HepG2 (cell line): ENCODE measurements at regions of chr14 and their contacts with region 1.

Region 1: GRCh38 chr14:94388384-94389103 is at the start of gene SERPINA1:
- DNase-seq: peak; percentile 96
- ATAC-seq: peak; percentile 92
- H3K4me3 ChIP-seq: peak within 1 kb of the TSS; percentile 69 to 92 (median 87)
- H3K27ac ChIP-seq: peak within 1 kb of the TSS; percentile 90
- H3K4me1 ChIP-seq: peaks cover 81% of the 10 kb centered on the region
- H3K27me3 ChIP-seq: no peaks in the 10 kb centered on the region; a peak in 1 of 5 replicates
- CTCF ChIP-seq: peak; percentile 38; the same call in 1 of the 2 replicates
- EP300 ChIP-seq: peak in 1 of 2 experiments; percentile 95; a peak in 2 of 4 replicates
- POLR2A ChIP-seq: peak; percentile 99 to 100
- RAD21 ChIP-seq: no peak; the same call in none of the 2 replicates
- total RNA-seq, gene SERPINA1: 2,013 and 3,266 TPM in 2 replicates

Region 2: GRCh38 chr14:94305620-94306019 is 82.9 kb before region 1 on chr14:
- CTCF ChIA-PET with region 1: no interaction called
- POLR2A ChIA-PET with region 1: no interaction called
- in situ Hi-C with region 1: no loop called
- intact Hi-C with region 1: no loop called
- DNase-seq: no peak
- ATAC-seq: no peak
- H3K4me3 ChIP-seq: no peak overlapping the region
- H3K27ac ChIP-seq: no peak overlapping the region
- H3K4me1 ChIP-seq: peaks cover 14% of the 10 kb centered on the region
- H3K27me3 ChIP-seq: no peaks in the 10 kb centered on the region
- CTCF ChIP-seq: no peak
- EP300 ChIP-seq: no peak
- POLR2A ChIP-seq: no peak
- RAD21 ChIP-seq: no peak

Region 3: DNA sequence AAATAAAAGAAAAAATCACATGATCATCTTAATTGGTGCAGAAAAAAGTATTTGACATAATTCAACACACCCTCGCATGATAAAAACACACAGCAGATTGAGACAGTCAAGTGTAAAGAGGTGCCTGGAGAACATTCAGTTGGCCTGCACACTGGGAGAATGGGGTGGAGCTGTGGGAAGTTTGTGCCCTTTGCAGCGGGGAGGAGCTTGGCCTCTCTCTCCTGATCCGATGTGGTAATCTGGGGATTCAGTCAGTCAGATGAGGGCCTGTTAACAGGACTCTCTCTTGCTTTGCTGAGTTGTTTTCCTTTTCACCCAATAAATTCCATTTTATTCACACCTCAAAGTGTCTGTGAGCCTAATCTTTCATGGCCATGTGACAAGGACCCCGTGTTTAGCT is 71.3 kb before region 1 on chr14:
- CTCF ChIA-PET with region 1: no interaction called
- POLR2A ChIA-PET with region 1: interaction called, 20 read pairs
- in situ Hi-C with region 1: no loop called
- intact Hi-C with region 1: no loop called
- DNase-seq: peak; percentile 78
- ATAC-seq: peak; percentile 86
- H3K4me3 ChIP-seq: peak overlapping the region in 1 of 3 experiments; percentile 47; a peak in 1 of 6 replicates
- H3K27ac ChIP-seq: peak overlapping the region; percentile 63
- H3K4me1 ChIP-seq: peaks cover 96% of the 10 kb centered on the region
- H3K27me3 ChIP-seq: no peaks in the 10 kb centered on the region
- CTCF ChIP-seq: peak; percentile 7; the same call in 1 of the 2 replicates
- EP300 ChIP-seq: no peak
- POLR2A ChIP-seq: peak; percentile 44 to 73; a peak in 3 of 4 replicates
- RAD21 ChIP-seq: no peak

Region 4: DNA sequence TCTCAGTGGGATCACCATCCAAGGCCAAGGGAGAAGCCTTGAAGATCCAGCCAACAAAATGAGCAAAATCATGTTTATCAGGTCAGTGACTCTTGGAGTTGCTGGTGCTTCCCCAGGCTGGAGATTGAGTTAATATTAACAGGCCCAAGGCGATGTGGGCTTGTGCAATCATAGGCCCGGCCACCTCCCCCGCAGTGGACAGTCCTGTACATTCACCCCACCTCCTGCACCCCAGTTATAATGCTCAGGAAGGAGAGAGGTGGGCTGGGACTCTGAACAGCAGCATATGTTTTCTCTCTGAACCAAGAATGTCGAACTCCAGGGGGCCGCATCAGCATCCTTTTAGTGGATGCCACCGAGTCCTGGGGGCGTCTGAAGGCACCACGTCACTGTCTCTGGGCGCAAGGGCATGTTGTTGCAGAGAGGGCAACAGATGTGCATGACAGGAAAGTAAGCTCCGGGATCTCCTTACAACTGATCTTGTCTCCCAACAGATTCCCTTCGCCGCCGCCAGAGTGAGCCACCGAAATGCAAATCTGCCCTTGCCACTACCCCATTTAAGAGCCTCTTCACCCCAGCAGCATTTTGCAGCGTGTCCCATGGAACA is 33.2 kb before region 1 on chr14:
- CTCF ChIA-PET with region 1: no interaction called
- POLR2A ChIA-PET with region 1: interaction called, 32 read pairs
- in situ Hi-C with region 1: no loop called
- intact Hi-C with region 1: loop called (anchors 1 kb)
- DNase-seq: peak; percentile 85
- ATAC-seq: peak; percentile 95
- H3K4me3 ChIP-seq: peak overlapping the region; percentile 40 to 65 (median 44); a peak in 5 of 6 replicates
- H3K27ac ChIP-seq: peak overlapping the region; percentile 63
- H3K4me1 ChIP-seq: peaks cover 61% of the 10 kb centered on the region
- H3K27me3 ChIP-seq: no peaks in the 10 kb centered on the region
- CTCF ChIP-seq: peak; percentile 88
- EP300 ChIP-seq: peak in 1 of 2 experiments; percentile 54; a peak in 2 of 4 replicates
- POLR2A ChIP-seq: peak in 1 of 2 experiments; percentile 34; a peak in 1 of 4 replicates
- RAD21 ChIP-seq: peak; percentile 80

Region 5: DNA sequence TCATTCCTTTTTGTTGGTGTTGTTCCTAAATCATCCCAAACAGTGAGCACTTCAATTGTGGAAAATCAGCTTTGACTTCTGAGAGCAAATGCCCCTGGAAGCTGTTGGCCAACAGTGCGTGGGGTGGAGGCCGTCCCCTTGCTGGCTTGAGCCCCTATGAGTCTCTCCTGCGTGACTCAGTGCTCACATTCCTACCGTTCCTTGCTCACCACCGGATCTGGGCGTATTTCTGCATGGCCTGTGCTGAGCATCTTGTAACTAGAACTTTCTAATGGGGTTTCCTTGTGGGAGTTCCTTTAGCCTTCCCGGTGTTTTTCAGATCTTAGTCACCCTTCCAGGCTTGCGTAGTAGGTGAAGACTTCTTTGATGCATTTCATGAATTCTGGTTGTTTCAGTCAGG is 14.8 kb before region 1 on chr14:
- CTCF ChIA-PET with region 1: no interaction called
- POLR2A ChIA-PET with region 1: interaction called, 88 read pairs
- in situ Hi-C with region 1: no loop called
- intact Hi-C with region 1: no loop called
- DNase-seq: no peak
- ATAC-seq: no peak
- H3K4me3 ChIP-seq: no peak overlapping the region
- H3K27ac ChIP-seq: no peak overlapping the region
- H3K4me1 ChIP-seq: peaks cover 100% of the 10 kb centered on the region
- H3K27me3 ChIP-seq: no peaks in the 10 kb centered on the region
- CTCF ChIP-seq: no peak
- EP300 ChIP-seq: no peak
- POLR2A ChIP-seq: no peak
- RAD21 ChIP-seq: no peak

Region 6: GRCh38 chr14:94412671-94413638 is 24.4 kb after region 1 on chr14:
- CTCF ChIA-PET with region 1: interaction called, 5 read pairs
- POLR2A ChIA-PET with region 1: interaction called, 102 read pairs
- in situ Hi-C with region 1: no loop called
- intact Hi-C with region 1: loop called (anchors 1 kb)
- DNase-seq: peak; percentile 70
- ATAC-seq: peak; percentile 90
- H3K4me3 ChIP-seq: peak overlapping the region in 1 of 3 experiments; percentile 9; a peak in 1 of 6 replicates
- H3K27ac ChIP-seq: peak overlapping the region; percentile 48
- H3K4me1 ChIP-seq: peaks cover 77% of the 10 kb centered on the region
- H3K27me3 ChIP-seq: no peaks in the 10 kb centered on the region
- CTCF ChIP-seq: peak; percentile 94
- EP300 ChIP-seq: no peak
- POLR2A ChIP-seq: no peak
- RAD21 ChIP-seq: peak; percentile 92

Region 7: DNA sequence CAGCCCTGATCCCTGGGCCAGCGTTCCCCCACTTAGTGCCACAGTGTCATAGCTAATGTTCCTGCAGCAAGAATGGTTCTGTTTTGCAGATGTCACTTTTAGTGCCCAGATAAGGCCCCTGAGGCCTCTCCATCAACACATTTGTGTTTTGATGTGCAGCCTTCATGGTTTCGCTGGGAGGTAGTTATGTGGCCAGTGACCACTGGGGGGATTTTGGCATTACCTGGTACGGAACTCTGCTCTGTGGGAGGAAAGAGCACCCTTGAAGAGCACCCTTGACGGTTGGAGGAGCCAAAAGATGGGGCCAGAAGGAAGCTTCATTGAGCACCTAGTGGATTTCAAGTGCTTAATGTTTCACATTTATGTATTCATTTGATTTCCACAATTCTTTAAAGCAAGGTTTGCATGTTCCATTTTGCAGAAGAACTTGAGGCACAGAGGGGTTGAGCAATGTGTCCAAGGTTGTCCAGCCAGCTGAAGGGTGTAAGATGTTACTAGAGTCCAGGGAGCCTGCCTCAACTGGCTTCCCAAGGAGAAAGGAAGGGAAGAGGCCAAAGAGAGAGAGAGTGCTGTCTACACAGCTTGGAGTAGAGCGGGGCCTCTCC is 51.0 kb after region 1 on chr14:
- CTCF ChIA-PET with region 1: no interaction called
- POLR2A ChIA-PET with region 1: no interaction called
- in situ Hi-C with region 1: no loop called
- intact Hi-C with region 1: no loop called
- DNase-seq: no peak
- ATAC-seq: peak; percentile 66
- H3K4me3 ChIP-seq: no peak overlapping the region
- H3K27ac ChIP-seq: no peak overlapping the region
- H3K4me1 ChIP-seq: peaks cover 19% of the 10 kb centered on the region
- H3K27me3 ChIP-seq: no peaks in the 10 kb centered on the region
- CTCF ChIP-seq: no peak
- EP300 ChIP-seq: no peak
- POLR2A ChIP-seq: peak in 1 of 2 experiments; percentile 35; a peak in 1 of 4 replicates
- RAD21 ChIP-seq: no peak